H1 (cell line): ENCODE measurements at regions of chr22 and their contacts with region 1.

Region 1: DNA sequence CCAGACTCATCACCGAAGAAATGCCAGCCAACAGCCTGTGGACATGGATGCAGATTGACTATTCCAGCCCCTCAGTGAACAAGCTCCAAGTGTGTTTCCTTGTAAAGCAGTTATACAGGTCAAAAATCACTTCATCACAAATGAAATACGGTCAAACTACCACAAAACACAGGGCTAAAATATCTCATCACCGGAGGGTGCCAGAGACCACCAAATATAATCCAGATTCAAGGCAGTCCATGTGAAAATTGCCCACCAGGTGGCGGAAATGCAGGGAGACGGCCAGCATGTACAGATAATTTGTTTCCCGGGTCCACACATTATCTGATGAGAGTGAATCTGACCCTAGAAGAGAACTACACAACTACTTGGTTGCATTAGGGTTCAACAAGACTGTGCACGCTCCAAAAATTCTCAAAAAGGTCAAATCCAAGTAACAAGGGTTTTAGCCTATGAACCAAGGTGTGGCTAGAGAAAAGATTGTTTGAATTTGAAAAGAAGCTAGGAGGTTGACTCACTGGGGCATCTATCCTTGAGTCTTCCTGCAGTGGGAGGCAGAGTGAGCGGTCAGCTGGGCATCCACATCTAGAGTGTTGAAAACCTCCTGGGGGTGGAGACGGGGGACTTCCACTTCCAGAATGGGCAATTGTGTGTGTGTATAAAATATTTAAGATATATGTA is 71.7 kb downstream of the IGLL5 start:
- DNase-seq: peak in 1 of 2 experiments; percentile 87
- H3K4me3 ChIP-seq: no peak overlapping the region
- H3K27ac ChIP-seq: no peak overlapping the region
- H3K4me1 ChIP-seq: 0 out of 7 replicates have a peak, but pooled peaks cover 0 to 4% (median under 1%) of the 10 kb centered on the region in 4 experiments
- H3K27me3 ChIP-seq: peaks cover 0 to 13% (median 2%) of the 10 kb centered on the region in 4 experiments; a peak in 2 of 7 replicates
- CTCF ChIP-seq: peak; percentile 68 to 100 (median 94)
- EP300 ChIP-seq: no peak
- POLR2A ChIP-seq: no peak
- RAD21 ChIP-seq: peak; percentile 99 to 100

Region 2: DNA sequence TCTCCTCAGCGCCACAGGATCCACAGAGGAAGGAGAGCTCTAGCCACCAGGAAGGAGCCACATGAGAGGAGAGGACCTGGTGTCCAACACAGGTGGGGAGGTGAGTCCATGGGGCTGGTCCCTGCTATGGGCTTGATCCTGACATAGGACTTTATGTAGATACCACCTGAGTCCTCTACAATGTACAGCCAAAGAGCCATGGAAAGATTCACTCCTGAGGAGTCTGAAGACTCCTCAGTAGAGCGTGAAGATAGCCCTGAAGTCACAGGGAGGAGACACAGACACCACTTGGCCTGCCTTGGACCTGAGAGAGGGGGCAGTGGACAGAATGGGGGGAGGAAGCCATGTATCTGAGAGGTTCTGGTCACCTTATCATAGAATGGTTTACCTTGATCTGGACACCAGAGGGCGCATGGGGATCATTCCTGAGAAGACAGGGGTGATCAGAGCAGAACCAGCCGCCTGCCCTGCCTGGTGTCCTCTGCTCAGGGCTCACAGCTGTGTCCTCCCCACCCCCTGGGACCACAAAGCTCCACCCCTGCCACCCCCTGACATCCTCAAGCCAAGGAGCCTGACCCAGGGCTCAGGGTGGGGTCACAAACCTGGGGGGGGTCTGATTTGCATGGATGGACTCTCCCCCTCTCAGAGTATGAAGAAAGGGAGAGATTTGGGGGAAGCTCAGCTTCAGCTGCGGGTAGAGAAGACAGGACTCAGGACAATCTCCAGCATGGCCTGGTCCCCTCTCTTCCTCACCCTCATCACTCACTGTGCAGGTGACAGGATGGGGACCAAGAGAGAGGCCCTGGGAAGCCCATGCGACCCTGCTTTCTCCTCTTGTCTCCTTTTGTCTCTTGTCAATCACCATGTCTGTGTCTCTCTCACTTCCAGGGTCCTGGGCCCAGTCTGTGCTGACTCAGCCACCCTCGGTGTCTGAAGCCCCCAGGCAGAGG is 527.7 kb before region 1 on chr22:
- CTCF ChIA-PET with region 1: interaction called, 64 read pairs
- POLR2A ChIA-PET with region 1: no interaction called
- DNase-seq: peak in 1 of 2 experiments; percentile 89
- H3K4me3 ChIP-seq: no peak overlapping the region
- H3K27ac ChIP-seq: no peak overlapping the region
- H3K4me1 ChIP-seq: no peaks in the 10 kb centered on the region
- H3K27me3 ChIP-seq: peaks cover 54 to 95% (median 82%) of the 10 kb centered on the region in 4 experiments
- CTCF ChIP-seq: peak; percentile 57 to 76 (median 69)
- EP300 ChIP-seq: no peak
- POLR2A ChIP-seq: no peak
- RAD21 ChIP-seq: peak; percentile 66 to 73

Region 3: DNA sequence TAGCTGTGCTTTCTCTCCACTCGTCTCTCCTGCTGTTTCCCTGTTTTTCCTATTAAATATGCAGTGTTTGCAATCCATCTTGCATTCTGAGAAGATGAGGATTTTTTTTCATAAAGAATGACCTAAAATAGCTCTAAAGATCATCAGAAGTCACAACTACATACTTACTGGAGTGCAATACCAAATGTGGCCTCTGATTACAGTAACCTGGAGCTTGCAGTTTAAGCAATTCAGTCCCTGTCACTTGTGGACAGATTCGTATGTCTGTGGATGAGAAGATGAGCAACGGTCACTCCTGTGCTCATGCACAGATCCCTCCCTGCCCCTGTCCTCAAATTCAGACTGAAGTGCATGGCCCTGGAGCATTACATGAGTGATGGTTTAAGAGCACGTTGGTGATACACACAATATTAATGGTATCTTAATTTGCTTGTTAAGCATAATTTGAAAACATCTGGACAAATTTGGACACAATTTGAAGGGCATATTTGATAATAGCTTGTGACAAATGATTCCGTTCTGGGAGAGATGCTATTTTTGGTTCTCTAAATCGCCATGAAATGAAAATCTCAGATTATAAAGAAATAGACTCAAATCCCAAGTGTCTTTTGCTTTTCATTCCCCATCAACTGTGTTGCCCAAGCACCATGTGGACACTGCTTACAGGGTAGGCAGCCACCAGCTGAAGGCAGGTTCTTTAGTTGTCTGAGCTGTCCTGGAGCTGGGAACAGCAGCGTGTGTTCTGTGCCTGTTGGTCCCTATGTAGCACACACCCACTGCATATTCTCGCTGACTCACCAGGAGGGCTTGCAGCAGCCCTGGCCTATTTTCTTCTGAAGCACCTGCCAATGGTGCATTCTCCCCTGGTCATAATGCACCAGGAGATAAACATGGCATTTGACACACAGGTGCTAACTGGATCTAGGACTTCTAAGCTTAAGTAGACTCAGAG is 367.7 kb before region 1 on chr22:
- CTCF ChIA-PET with region 1: interaction called, 11 read pairs
- POLR2A ChIA-PET with region 1: no interaction called
- DNase-seq: no peak
- H3K4me3 ChIP-seq: no peak overlapping the region
- H3K27ac ChIP-seq: no peak overlapping the region
- H3K4me1 ChIP-seq: no peaks in the 10 kb centered on the region
- H3K27me3 ChIP-seq: peaks cover 21 to 52% (median 37%) of the 10 kb centered on the region in 4 experiments
- CTCF ChIP-seq: no peak
- EP300 ChIP-seq: no peak
- POLR2A ChIP-seq: no peak
- RAD21 ChIP-seq: no peak

Region 4: GRCh38 chr22:23098718-23099530 is 139.6 kb after region 1 on chr22:
- CTCF ChIA-PET with region 1: interaction called, 13 read pairs
- POLR2A ChIA-PET with region 1: no interaction called
- DNase-seq: no peak
- H3K4me3 ChIP-seq: no peak overlapping the region
- H3K27ac ChIP-seq: no peak overlapping the region
- H3K4me1 ChIP-seq: no peaks in the 10 kb centered on the region
- H3K27me3 ChIP-seq: no peaks in the 10 kb centered on the region
- CTCF ChIP-seq: no peak
- EP300 ChIP-seq: no peak
- POLR2A ChIP-seq: no peak
- RAD21 ChIP-seq: no peak

Region 5: GRCh38 chr22:23128269-23129108 is 169.2 kb after region 1 on chr22:
- CTCF ChIA-PET with region 1: interaction called, 384 read pairs
- POLR2A ChIA-PET with region 1: no interaction called
- DNase-seq: peak; percentile 70 to 96
- H3K4me3 ChIP-seq: no peak overlapping the region
- H3K27ac ChIP-seq: no peak overlapping the region
- H3K4me1 ChIP-seq: peaks cover 0 to 1% (median 0%) of the 10 kb centered on the region in 4 experiments; a peak in 1 of 7 replicates
- H3K27me3 ChIP-seq: peaks cover 0 to 5% (median 3%) of the 10 kb centered on the region in 4 experiments; a peak in 3 of 7 replicates
- CTCF ChIP-seq: peak; percentile 76 to 98 (median 85)
- EP300 ChIP-seq: no peak
- POLR2A ChIP-seq: no peak
- RAD21 ChIP-seq: peak; percentile 98 to 99